Cardiac septum (tissue), 1 donor: ENCODE measurements at regions of chr20 and their contacts with region 1.

Region 1: DNA sequence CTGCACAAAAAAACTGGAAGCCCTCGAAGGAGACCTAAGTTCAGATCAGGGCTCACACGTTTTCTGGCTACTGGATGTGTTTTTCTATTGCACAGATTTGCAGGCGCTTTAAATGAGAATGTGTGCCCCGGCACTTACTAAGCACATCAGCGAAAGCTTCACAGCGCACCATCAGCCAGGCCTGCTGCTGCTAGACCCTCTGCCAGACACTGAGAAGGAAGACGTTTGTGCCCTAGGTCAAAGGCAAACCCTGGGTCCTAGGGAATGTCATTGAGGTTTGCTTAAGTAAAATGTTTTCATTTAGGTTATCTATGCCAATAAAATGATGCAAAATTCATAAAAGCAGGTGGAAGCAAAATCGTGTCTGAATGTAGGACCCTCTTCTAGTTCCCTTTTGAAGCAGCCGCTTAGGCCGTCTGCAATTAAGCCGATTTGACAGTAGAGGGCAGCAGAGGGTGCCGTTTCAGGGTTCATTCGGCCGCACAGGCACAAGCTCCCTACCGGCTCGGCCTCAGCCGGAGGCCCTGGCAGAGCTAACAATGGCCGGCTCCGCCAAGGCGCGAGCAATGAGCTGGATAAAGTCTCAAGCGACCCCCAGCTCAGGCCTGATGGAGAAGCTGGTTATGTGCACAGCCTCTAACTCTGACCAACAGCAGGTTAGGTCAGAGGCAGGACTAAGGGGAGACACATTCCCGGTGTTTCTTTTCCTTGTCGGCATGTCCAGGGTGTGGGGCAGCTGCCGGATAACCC is 107.2 kb upstream of the FOXA2 start:
- DNase-seq: peak; percentile 91

Region 2: DNA sequence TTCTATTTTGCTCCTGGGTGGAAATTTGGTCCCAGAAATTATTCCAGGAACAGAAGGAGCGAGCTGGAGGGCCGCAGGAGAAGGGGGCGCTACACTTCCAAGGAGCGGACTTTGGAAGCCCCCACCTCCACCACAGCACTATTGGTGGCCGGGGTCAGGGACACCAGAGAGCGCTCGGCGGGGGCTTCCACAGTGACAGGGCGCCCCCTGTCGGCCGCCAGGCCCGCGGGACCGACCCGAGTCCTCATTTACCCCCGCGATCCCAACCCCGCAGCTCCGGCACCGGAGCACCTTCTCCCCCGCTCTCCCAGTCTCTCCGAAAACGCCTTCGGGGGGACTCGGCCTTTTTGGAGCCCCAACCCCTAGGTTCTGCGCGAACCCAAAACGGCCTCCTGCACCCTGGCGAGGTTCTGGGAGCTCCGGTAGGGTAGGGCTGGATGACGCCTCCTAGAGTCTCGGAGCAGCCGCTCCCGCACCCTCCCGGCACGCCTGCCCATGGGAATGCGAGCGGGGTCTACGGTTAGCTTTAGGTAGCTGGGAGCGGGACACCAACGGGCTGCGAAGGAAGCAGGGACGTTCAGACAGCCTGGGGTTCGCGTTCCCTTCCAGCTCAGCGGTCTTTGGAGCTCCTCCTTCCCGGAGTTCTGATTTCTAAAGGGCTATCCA is 104.8 kb before region 1 on chr20:
- intact Hi-C with region 1: no loop called
- DNase-seq: no peak

Region 3: DNA sequence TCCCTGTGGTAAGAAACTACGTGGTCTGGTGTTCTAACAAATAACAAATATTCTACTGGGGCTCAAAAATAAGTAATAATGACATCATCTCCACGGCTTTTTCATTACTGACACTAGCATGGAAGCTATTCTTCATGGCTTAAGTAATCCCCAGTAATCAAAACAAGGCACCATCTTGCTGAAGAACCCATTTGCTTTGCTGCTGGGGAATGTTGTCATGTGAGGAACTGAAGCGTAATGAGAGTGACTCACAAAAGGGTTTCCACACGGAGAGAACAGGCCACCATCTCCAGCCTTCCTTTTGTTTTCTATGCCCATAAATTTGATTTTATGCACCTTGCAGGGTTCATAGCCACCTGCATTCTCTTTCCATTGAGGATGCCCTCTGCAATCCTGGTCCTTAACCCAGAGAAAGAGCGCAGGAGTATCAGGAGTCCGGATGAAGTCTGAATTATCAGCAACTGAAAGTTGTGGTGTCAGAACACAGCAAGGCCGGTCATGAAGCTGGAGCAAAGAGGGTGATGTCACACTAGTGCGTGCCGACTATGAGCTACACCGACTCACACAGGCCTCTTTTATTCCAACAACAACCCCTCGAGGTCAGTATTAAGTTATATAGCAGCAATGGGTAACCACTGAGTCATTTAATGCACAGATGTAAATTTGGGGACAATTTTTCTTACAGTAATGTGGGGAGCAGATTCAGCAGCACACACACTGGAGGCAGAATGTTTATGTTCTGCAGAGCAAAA is 169.9 kb after region 1 on chr20:
- intact Hi-C with region 1: loop called (anchors 10 kb)
- DNase-seq: no peak

Region 4: DNA sequence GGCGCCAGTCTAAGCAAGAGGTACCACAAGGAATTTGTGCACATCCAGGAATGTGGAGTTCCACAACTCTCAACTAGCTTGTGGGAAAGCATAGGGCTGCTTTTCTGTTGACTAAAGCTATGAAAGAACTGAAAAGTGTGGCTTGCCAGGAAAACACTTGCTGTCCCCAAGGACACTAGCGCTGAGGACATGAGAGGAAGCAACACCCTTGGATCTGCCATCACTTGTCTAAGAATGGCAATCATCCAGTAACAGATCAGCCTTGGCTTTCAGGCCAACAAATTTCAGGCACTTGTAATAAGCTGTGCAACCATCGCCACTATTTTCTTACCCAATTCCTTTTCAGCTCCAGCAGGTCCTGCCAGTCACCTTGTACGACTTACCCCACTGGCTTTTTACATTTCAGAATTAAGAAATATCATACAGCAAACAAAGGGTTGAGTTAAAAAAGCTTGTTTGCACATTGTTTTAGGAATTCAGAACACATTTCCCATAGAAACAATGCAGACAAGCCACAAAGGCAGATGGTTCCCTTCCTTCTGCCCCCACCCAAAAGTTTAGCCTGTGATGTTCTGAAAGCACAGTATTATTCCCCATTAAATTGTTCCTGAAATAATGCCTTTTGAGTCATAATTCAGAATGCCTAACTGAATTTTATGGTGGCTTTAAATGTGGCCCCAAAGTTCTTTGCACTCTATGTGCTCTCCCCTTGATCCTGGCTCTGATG is 285.7 kb after region 1 on chr20:
- intact Hi-C with region 1: loop called (anchors 5 kb)
- DNase-seq: no peak

Region 5: GRCh38 chr20:23235173-23236027 is 543.9 kb after region 1 on chr20:
- intact Hi-C with region 1: loop called (anchors 1 kb)
- DNase-seq: peak; percentile 87

Region 6: DNA sequence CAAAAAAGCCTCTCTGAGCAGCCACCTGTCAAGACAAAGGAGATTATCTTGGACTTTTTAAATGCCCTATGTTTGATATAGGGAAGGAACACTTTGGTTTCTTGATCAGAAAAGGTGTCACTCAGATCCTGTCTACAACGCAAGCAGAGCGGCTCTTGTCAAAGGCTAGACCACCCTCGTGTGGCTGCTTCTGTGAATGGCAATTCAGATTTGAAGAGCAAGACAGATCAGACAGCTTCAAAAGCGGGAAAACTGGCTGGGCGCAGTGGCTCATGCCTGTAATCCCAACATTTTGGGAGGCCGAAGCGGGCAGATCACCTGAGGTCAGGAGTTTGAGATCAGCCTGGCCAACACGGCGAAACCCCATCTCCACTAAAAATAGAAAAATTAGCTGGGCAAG is 649.0 kb after region 1 on chr20:
- intact Hi-C with region 1: loop called (anchors 2 kb)
- DNase-seq: no peak